Heart right ventricle (tissue), 16 donors: ENCODE measurements at regions of chr10 and their contacts with region 1.

Region 1: GRCh38 chr10:29635711-29636144 is 957 bp upstream of the SVIL start:
- DNase-seq: no peak
- ATAC-seq: peak in 5 of 8 donors; percentile 3 to 61 (median 43)
- H3K4me3 ChIP-seq: peak overlapping the region in 5 of 10 donors; percentile 6 to 59 (median 55)
- H3K27ac ChIP-seq: peak overlapping the region; percentile 62 to 93 (median 86)
- H3K4me1 ChIP-seq: peaks cover 2 to 42% (median 27%) of the 10 kb centered on the region in 9 donors
- H3K27me3 ChIP-seq: no peaks in the 10 kb centered on the region
- CTCF ChIP-seq: no peak

Region 2: DNA sequence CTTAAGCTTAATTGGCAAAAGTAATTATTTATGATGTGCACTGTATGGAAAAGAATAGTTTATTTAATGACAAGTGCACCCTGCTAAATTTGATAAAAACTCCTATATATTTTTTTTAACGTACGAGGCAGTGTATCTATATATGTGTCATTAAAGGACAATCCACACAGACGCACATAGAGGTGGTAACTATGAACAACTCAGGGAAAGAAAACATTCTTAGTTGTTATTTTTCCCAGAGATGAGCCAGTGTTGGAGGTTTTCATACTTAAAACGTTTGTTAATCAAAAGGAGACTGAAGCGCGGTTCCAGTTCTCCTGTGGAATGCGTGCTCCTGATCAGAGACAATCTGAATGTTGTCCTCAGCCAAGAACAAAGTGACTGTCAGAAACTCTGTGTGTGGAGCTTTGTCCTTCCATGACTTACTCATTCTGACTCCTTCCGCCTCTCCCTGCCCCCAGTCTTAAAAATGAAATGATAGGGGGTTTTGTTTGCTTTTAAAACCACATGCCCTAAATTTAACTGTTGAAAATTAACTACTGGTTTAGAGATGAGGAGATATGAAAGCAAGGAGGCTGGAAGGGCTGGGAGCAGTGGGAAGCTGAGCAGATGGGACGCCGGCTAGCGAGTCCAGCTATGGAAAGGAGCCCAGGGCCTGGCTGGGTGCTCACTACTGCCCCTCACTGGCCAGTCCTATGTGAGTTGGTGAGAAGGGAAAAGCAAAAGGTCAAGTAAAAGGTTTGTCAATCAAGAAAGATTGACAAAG is 100.5 kb before region 1 on chr10:
- intact Hi-C with region 1: loop called in 1 of 10 experiments (anchors 10 kb)
- DNase-seq: peak in 1 of 2 donors; percentile 56
- ATAC-seq: peak; percentile 49 to 81 (median 72)
- H3K4me3 ChIP-seq: peak overlapping the region in 3 of 10 donors; percentile 3 to 21 (median 9)
- H3K27ac ChIP-seq: peak overlapping the region; percentile 28 to 85 (median 77)
- H3K4me1 ChIP-seq: peaks cover 6 to 58% (median 37%) of the 10 kb centered on the region in 9 donors
- H3K27me3 ChIP-seq: no peaks in the 10 kb centered on the region
- CTCF ChIP-seq: peak; percentile 35 to 70 (median 65)

Region 3: GRCh38 chr10:29590915-29591650 is 44.6 kb before region 1 on chr10:
- intact Hi-C with region 1: loop called in 2 of 10 experiments (anchors 5 kb)
- DNase-seq: no peak
- ATAC-seq: no peak
- H3K4me3 ChIP-seq: no peak overlapping the region
- H3K27ac ChIP-seq: peak overlapping the region in 7 of 10 donors; percentile 23 to 84 (median 66)
- H3K4me1 ChIP-seq: peaks cover 14 to 94% (median 56%) of the 10 kb centered on the region in 9 donors
- H3K27me3 ChIP-seq: no peaks in the 10 kb centered on the region
- CTCF ChIP-seq: peak in 3 of 9 donors; percentile 2 to 18 (median 3)

Region 4: GRCh38 chr10:29725133-29725720 is 89.5 kb after region 1 on chr10:
- intact Hi-C with region 1: loop called in 6 of 10 experiments (anchors 5 to 10 kb)
- DNase-seq: peak in 1 of 2 donors; percentile 57
- ATAC-seq: peak; percentile 80 to 95 (median 90)
- H3K4me3 ChIP-seq: peak overlapping the region in 1 of 10 donors; percentile 23
- H3K27ac ChIP-seq: peak overlapping the region in 9 of 10 donors; percentile 11 to 76 (median 68)
- H3K4me1 ChIP-seq: peaks cover 3 to 52% (median 29%) of the 10 kb centered on the region in 9 donors
- H3K27me3 ChIP-seq: no peaks in the 10 kb centered on the region
- CTCF ChIP-seq: no peak

Region 5: GRCh38 chr10:29857843-29858701 is 222.3 kb after region 1 on chr10:
- intact Hi-C with region 1: loop called in 2 of 10 experiments (anchors 10 kb)
- DNase-seq: peak; percentile 65 to 67
- ATAC-seq: peak; percentile 67 to 94 (median 87)
- H3K4me3 ChIP-seq: peak overlapping the region in 1 of 10 donors; percentile 12
- H3K27ac ChIP-seq: peak overlapping the region in 6 of 10 donors; percentile 5 to 59 (median 40)
- H3K4me1 ChIP-seq: peaks cover 0 to 13% (median 10%) of the 10 kb centered on the region in 9 donors
- H3K27me3 ChIP-seq: no peaks in the 10 kb centered on the region
- CTCF ChIP-seq: peak; percentile 45 to 81 (median 68)